Activated CD4-positive, alpha-beta memory T cell treated with anti-CD3 and anti-CD28 coated beads for 36 hours (primary cell): ENCODE measurements at regions of chr9 and their contacts with region 1.

Region 1: GRCh38 chr9:97906236-97906831 is 16.0 kb downstream of the TRMO start:
- DNase-seq: peak; percentile 74
- H3K4me3 Mint-ChIP-seq: peak overlapping the region; percentile 66
- H3K27ac Mint-ChIP-seq: peak overlapping the region; percentile 94
- H3K4me1 Mint-ChIP-seq: peaks cover 78% of the 10 kb centered on the region
- H3K27me3 Mint-ChIP-seq: no peaks in the 10 kb centered on the region

Region 2: GRCh38 chr9:97853844-97854695 is 52.3 kb before region 1 on chr9:
- CTCF ChIA-PET with region 1: interaction called, 5 read pairs
- POLR2A ChIA-PET with region 1: no interaction called
- intact Hi-C with region 1: loop called (anchors 5 kb)
- DNase-seq: peak; percentile 76
- H3K4me3 Mint-ChIP-seq: peak overlapping the region; percentile 87
- H3K27ac Mint-ChIP-seq: no peak overlapping the region
- H3K4me1 Mint-ChIP-seq: peaks cover 24% of the 10 kb centered on the region
- H3K27me3 Mint-ChIP-seq: peaks cover 74% of the 10 kb centered on the region